Activated CD4-positive, alpha-beta memory T cell treated with anti-CD3 and anti-CD28 coated beads for 36 hours (primary cell): ENCODE measurements at regions of chr2 and their contacts with region 1.

Region 1: GRCh38 chr2:209577376-209578357 is 153.8 kb downstream of the MAP2 start:
- DNase-seq: no peak
- H3K4me3 Mint-ChIP-seq: no peak overlapping the region
- H3K27ac Mint-ChIP-seq: no peak overlapping the region
- H3K4me1 Mint-ChIP-seq: no peaks in the 10 kb centered on the region
- H3K27me3 Mint-ChIP-seq: no peaks in the 10 kb centered on the region

Region 2: GRCh38 chr2:209334198-209335017 is 243.3 kb before region 1 on chr2:
- CTCF ChIA-PET with region 1: interaction called, 4 read pairs
- POLR2A ChIA-PET with region 1: no interaction called
- intact Hi-C with region 1: loop called (anchors 5 kb)
- DNase-seq: peak; percentile 48
- H3K4me3 Mint-ChIP-seq: no peak overlapping the region
- H3K27ac Mint-ChIP-seq: no peak overlapping the region
- H3K4me1 Mint-ChIP-seq: no peaks in the 10 kb centered on the region
- H3K27me3 Mint-ChIP-seq: no peaks in the 10 kb centered on the region